Activated CD4-positive, alpha-beta T cell treated with anti-CD3 and anti-CD28 coated beads for 36 hours (primary cell): ENCODE measurements at regions of chr9 and their contacts with region 1.

Region 1: GRCh38 chr9:34252670-34253459 is 74.0 kb downstream of the UBAP1 start:
- DNase-seq: peak; percentile 82
- ATAC-seq: peak; percentile 84
- H3K4me3 Mint-ChIP-seq: no peak overlapping the region
- H3K27ac Mint-ChIP-seq: peak overlapping the region; percentile 8
- H3K4me1 Mint-ChIP-seq: peaks cover 21% of the 10 kb centered on the region
- H3K27me3 Mint-ChIP-seq: no peaks in the 10 kb centered on the region

Region 2: DNA sequence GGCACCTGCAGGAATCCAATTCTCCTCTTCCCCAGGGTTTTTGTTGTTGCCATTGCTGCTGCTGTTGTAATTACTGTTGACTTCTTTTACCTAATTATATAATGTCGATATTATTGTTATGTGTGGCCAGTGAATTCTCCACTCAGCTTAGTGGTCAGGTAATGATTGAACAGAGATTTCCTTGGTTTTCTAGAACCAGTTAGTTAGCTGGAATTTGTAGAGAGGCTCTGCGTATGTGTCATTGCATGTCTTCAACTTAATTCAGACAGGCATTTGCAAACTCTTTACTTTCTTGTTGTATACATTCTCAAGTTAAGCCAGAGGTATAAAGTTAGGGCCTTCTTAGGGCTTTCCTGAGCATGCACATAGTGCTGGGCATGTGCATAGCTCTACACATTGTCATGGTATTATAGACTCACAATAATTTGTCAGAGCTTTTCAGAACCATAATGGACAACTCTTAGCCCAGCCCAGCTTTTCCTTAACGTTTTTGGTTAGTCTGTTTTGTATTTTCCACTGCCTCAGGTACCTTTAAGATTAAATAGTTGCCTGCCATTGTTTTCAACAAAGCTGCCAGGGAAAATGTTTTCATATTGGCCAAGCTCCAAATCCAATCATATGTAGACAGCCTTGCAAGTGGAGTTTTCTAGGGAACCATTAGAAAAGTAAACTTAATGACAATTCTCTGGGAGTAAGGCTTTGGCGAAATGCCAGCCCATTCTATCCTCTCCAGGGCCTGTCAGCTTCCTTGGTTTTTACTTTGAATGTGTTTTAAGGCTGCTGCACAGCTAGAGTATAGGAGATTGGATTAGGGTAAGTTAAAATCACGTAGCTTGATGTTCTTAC is 367.8 kb before region 1 on chr9:
- CTCF ChIA-PET with region 1: no interaction called
- POLR2A ChIA-PET with region 1: no interaction called
- intact Hi-C with region 1: no loop called
- DNase-seq: no peak
- ATAC-seq: no peak
- H3K4me3 Mint-ChIP-seq: no peak overlapping the region
- H3K27ac Mint-ChIP-seq: no peak overlapping the region
- H3K4me1 Mint-ChIP-seq: peaks cover 41% of the 10 kb centered on the region
- H3K27me3 Mint-ChIP-seq: no peaks in the 10 kb centered on the region

Region 3: GRCh38 chr9:33919276-33919897 is 333.5 kb before region 1 on chr9:
- CTCF ChIA-PET with region 1: no interaction called
- POLR2A ChIA-PET with region 1: no interaction called
- intact Hi-C with region 1: no loop called
- DNase-seq: no peak
- ATAC-seq: no peak
- H3K4me3 Mint-ChIP-seq: no peak overlapping the region
- H3K27ac Mint-ChIP-seq: peak overlapping the region; percentile 6
- H3K4me1 Mint-ChIP-seq: no peaks in the 10 kb centered on the region
- H3K27me3 Mint-ChIP-seq: no peaks in the 10 kb centered on the region

Region 4: DNA sequence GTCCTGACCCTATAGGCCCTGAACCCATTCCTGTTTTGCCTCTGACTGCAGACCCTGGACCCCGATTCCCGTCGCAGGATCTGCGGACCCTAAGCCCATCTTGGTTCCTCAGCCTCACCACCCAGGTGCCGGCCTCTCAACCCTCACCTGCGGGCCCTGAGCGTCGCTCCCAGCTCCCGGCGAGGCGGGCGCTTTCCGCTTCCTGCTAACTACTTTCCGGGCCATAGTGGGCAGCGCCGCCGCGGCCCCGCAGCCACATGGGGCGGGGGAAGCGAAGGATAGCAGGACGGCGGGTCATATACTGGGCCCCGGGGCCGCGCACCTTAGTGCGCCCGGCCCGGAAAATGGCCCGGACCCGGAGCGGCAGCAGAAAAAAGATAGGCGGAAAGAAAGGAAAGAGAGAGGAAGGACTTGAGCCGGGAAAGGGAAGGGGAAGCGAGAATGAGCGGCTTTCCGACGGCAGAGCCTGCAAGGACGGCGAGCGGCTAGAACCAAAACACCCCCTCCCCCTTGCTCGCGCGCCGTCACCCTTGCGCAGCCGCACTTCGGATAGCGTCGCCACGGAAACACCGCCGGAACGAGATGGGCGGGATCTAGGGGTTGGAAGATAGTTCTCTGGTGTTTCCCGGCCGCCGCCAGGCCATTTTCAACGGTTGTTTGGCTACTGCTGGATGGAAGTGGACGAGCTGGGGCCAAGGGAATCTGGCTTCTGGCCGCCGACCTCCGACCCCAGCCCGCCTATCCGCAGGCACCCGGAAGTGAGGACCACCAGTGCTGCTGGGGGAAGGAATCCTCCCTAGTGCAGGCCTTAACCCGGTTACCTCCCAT is 126.4 kb before region 1 on chr9 and contains the start of gene DCAF12:
- CTCF ChIA-PET with region 1: interaction called, 4 read pairs
- POLR2A ChIA-PET with region 1: no interaction called
- intact Hi-C with region 1: loop called (anchors 1 to 5 kb)
- DNase-seq: peak; percentile 95
- ATAC-seq: peak; percentile 97
- H3K4me3 Mint-ChIP-seq: peak within 1 kb of the TSS; percentile 95
- H3K27ac Mint-ChIP-seq: peak within 1 kb of the TSS; percentile 98
- H3K4me1 Mint-ChIP-seq: peaks cover 40% of the 10 kb centered on the region
- H3K27me3 Mint-ChIP-seq: no peaks in the 10 kb centered on the region
- total RNA-seq, gene DCAF12: 34.6 to 35.0 TPM

Region 5: GRCh38 chr9:34271265-34272006 is 18.6 kb after region 1 on chr9:
- CTCF ChIA-PET with region 1: interaction called, 17 read pairs
- POLR2A ChIA-PET with region 1: no interaction called
- intact Hi-C with region 1: no loop called
- DNase-seq: no peak
- ATAC-seq: no peak
- H3K4me3 Mint-ChIP-seq: no peak overlapping the region
- H3K27ac Mint-ChIP-seq: no peak overlapping the region
- H3K4me1 Mint-ChIP-seq: no peaks in the 10 kb centered on the region
- H3K27me3 Mint-ChIP-seq: no peaks in the 10 kb centered on the region

Region 6: DNA sequence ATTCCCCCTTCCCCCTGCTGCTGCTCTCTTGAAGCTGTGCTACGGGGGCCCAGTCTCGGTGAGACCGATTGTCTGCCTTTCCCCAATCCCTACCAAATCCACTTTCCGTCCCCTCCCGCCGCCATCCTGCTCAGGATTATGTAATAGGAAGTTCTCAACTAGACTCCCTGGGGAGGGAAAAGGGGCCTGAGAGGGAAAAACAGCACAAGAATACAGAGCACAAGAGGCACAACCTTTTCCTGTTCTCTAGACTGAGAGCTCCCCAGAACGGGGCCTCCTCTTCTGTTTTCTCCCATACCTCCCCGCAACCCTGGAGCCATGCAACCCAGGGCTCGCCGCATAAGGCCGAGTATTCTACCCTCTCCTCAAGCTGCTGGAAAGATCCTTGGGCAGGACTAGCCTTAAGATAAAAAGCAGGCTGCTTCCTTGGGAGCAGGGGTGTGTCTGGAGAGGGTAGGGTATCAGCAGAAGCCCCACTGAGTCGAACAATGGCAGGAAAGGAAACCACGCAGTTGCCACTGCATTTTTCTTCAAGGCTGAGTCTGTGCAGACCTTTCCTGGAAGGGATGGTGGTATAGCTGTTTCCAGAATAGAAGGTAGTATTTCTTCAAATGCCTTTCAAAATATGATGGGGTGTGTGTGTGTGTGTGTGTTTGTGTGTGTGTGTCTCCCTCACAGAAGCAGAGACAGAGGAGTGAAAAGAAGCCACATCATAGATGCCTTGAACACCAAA is 110.9 kb after region 1 on chr9:
- CTCF ChIA-PET with region 1: no interaction called
- POLR2A ChIA-PET with region 1: no interaction called
- intact Hi-C with region 1: no loop called
- DNase-seq: no peak
- ATAC-seq: peak; percentile 58
- H3K4me3 Mint-ChIP-seq: no peak overlapping the region
- H3K27ac Mint-ChIP-seq: peak overlapping the region; percentile 12
- H3K4me1 Mint-ChIP-seq: peaks cover 12% of the 10 kb centered on the region
- H3K27me3 Mint-ChIP-seq: no peaks in the 10 kb centered on the region